B cell (primary cell): ENCODE measurements at regions of chr14 and their contacts with region 1.

Region 1: GRCh38 chr14:74018586-74019407 is at the starts of genes BBOF1 and ENTPD5:
- DNase-seq: peak; percentile 93
- ATAC-seq: peak; percentile 96
- H3K4me3 ChIP-seq: peak within 1 kb of the TSS; percentile 39 to 95 (median 81)
- H3K4me3 Mint-ChIP-seq: peak within 1 kb of the TSS; percentile 97
- H3K27ac ChIP-seq: peak within 1 kb of the TSS; percentile 57 to 84
- H3K27ac Mint-ChIP-seq: peak within 1 kb of the TSS; percentile 93
- H3K4me1 ChIP-seq: peaks cover 5 to 12% of the 10 kb centered on the region in 2 donors
- H3K4me1 Mint-ChIP-seq: peaks cover 15% of the 10 kb centered on the region
- H3K27me3 ChIP-seq: no peaks in the 10 kb centered on the region
- H3K27me3 Mint-ChIP-seq: no peaks in the 10 kb centered on the region
- CTCF ChIP-seq: no peak
- total RNA-seq, gene BBOF1: 2.6 and 3.4 TPM in 2 replicates
- total RNA-seq, gene ENTPD5: 14.7 and 15.6 TPM in 2 replicates

Region 2: DNA sequence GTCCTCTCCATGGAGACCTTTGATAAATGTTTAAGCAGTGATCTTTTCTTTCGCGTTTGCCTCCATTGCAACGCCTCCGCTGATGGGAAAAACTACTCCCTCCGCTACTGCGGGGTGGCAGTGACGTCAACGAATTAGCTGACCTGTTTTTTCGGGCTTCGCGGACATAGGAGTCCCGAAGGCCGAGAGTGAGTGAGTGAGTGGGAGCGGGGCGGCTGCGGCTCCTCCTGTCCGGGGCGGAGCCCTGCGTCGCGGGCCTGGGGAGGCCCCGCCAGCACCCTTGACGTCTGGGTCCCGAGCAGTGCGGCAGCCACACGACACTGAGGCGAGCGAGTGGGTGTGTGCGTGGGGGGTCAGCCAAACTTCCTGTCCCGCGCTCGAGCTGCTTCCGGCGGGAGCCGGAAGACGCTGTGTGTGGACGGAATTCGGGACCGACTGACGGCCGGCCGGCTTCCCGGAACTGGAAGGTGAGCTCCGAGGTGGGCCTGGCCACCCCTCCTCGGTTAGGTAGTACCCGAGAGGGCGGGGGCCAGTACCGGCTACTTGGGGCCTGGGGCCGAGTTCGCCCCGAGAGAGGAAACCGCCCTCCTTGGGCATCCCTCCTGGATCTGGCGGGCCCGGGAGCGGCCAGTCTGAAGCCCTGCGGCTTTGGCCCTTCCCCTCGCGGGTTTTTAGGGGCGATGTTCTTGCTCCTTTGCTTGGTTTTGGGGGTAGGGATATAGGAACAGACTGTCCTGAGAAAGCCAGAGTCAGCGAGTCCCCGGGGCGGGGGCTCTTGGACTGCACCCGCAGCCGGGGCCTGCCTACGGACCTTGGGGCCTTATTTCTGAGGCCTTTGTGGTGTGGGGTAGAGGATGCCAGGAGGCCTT is 132.1 kb before region 1 on chr14 and contains the start of gene ZNF410:
- CTCF ChIA-PET with region 1: no interaction called
- POLR2A ChIA-PET with region 1: no interaction called
- intact Hi-C with region 1: loop called (anchors 2 kb)
- DNase-seq: peak; percentile 93
- ATAC-seq: peak; percentile 99
- H3K4me3 ChIP-seq: peak within 1 kb of the TSS; percentile 64 to 97 (median 94)
- H3K4me3 Mint-ChIP-seq: peak within 1 kb of the TSS; percentile 99
- H3K27ac ChIP-seq: peak within 1 kb of the TSS; percentile 94 to 96
- H3K27ac Mint-ChIP-seq: peak within 1 kb of the TSS; percentile 98
- H3K4me1 ChIP-seq: peaks cover 18 to 20% of the 10 kb centered on the region in 2 donors
- H3K4me1 Mint-ChIP-seq: peaks cover 41% of the 10 kb centered on the region
- H3K27me3 ChIP-seq: no peaks in the 10 kb centered on the region
- H3K27me3 Mint-ChIP-seq: no peaks in the 10 kb centered on the region
- CTCF ChIP-seq: no peak
- total RNA-seq, gene ZNF410: 58.3 and 69.0 TPM in 2 replicates

Region 3: GRCh38 chr14:73949744-73950734 is 68.8 kb before region 1 on chr14 and contains the starts of genes COQ6 and FAM161B:
- CTCF ChIA-PET with region 1: interaction called, 3 read pairs
- POLR2A ChIA-PET with region 1: interaction called, 4 read pairs
- intact Hi-C with region 1: loop called (anchors 1 kb)
- DNase-seq: peak; percentile 96
- ATAC-seq: peak; percentile 93
- H3K4me3 ChIP-seq: peak within 1 kb of the TSS; percentile 63 to 94 (median 89)
- H3K4me3 Mint-ChIP-seq: peak within 1 kb of the TSS; percentile 100
- H3K27ac ChIP-seq: peak within 1 kb of the TSS; percentile 78 to 96
- H3K27ac Mint-ChIP-seq: peak within 1 kb of the TSS; percentile 95
- H3K4me1 ChIP-seq: peaks cover 11 to 12% of the 10 kb centered on the region in 2 donors
- H3K4me1 Mint-ChIP-seq: peaks cover 20% of the 10 kb centered on the region
- H3K27me3 ChIP-seq: no peaks in the 10 kb centered on the region
- H3K27me3 Mint-ChIP-seq: no peaks in the 10 kb centered on the region
- CTCF ChIP-seq: peak; percentile 11
- total RNA-seq, gene COQ6: 34.1 and 38.2 TPM in 2 replicates
- total RNA-seq, gene FAM161B: 5.9 and 6.4 TPM in 2 replicates

Region 4: GRCh38 chr14:74084277-74085046 is 65.7 kb after region 1 on chr14 and contains the starts of genes ALDH6A1 and LIN52:
- CTCF ChIA-PET with region 1: interaction called, 3 read pairs
- POLR2A ChIA-PET with region 1: no interaction called
- intact Hi-C with region 1: loop called (anchors 1 kb)
- DNase-seq: peak; percentile 100
- ATAC-seq: peak; percentile 85
- H3K4me3 ChIP-seq: peak within 1 kb of the TSS; percentile 75 to 79 (median 77)
- H3K4me3 Mint-ChIP-seq: peak within 1 kb of the TSS; percentile 95
- H3K27ac ChIP-seq: peak within 1 kb of the TSS; percentile 34 to 79
- H3K27ac Mint-ChIP-seq: peak within 1 kb of the TSS; percentile 88
- H3K4me1 ChIP-seq: peaks cover 23 to 24% of the 10 kb centered on the region in 2 donors
- H3K4me1 Mint-ChIP-seq: peaks cover 35% of the 10 kb centered on the region
- H3K27me3 ChIP-seq: no peaks in the 10 kb centered on the region
- H3K27me3 Mint-ChIP-seq: no peaks in the 10 kb centered on the region
- CTCF ChIP-seq: no peak
- total RNA-seq, gene ALDH6A1: 14.9 and 16.7 TPM in 2 replicates
- total RNA-seq, gene LIN52: 13.1 and 15.5 TPM in 2 replicates

Region 5: GRCh38 chr14:74712499-74713394 is 694.0 kb after region 1 on chr14 and contains the starts of genes AREL1 and FCF1:
- CTCF ChIA-PET with region 1: no interaction called
- POLR2A ChIA-PET with region 1: no interaction called
- intact Hi-C with region 1: loop called (anchors 2 kb)
- DNase-seq: peak; percentile 91
- ATAC-seq: peak; percentile 94
- H3K4me3 ChIP-seq: peak within 1 kb of the TSS; percentile 64 to 97 (median 87)
- H3K4me3 Mint-ChIP-seq: peak within 1 kb of the TSS; percentile 88
- H3K27ac ChIP-seq: peak within 1 kb of the TSS; percentile 83 to 90
- H3K27ac Mint-ChIP-seq: peak within 1 kb of the TSS; percentile 85
- H3K4me1 ChIP-seq: peaks cover 18 to 20% of the 10 kb centered on the region in 2 donors
- H3K4me1 Mint-ChIP-seq: peaks cover 38% of the 10 kb centered on the region
- H3K27me3 ChIP-seq: no peaks in the 10 kb centered on the region
- H3K27me3 Mint-ChIP-seq: no peaks in the 10 kb centered on the region
- CTCF ChIP-seq: no peak
- total RNA-seq, gene AREL1: 39.4 and 44.4 TPM in 2 replicates
- total RNA-seq, gene FCF1: 40.6 and 41.6 TPM in 2 replicates